ENCODE measurements at regions of chr10 and their contacts with region 1.

Region 1: DNA sequence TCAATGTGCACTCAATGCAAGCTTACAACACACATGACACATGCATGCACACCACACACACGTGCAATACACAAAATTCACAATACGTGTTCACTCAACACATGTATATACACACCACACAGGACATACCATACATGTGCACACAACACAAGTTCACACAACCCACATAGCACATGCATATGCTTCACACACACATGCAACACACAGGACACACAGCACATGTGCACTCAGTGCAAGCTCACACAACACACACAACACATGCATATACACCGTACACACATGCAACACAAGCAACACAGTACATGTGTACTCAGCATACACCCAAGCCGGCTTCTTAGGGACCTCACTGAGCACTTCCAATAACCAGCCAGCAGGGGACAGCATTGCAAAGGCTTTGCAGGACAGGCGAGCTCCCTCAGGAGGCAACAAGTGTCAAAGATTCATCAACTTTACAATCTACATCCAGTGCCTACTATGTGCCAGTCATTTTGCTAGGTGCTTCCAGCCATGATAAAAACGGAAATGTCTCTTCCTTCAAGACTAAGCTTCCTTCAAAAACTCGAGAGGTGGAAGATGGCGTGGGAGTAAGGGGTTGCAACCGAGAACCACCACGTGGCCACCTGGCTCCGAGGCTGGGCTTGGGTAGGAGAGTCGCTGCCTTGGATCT is 61.1 kb downstream of the JCAD start:
- DNase-seq: peak; percentile 85
- ATAC-seq: peak; percentile 89
- H3K4me3 Mint-ChIP-seq: no peak overlapping the region
- H3K27ac Mint-ChIP-seq: no peak overlapping the region
- H3K4me1 Mint-ChIP-seq: peaks cover 5% of the 10 kb centered on the region
- H3K27me3 Mint-ChIP-seq: peaks cover 49% of the 10 kb centered on the region
- CTCF ChIP-seq: peak; percentile 96

Region 2: GRCh38 chr10:30013757-30014156 is 15.5 kb after region 1 on chr10:
- CTCF ChIA-PET with region 1: interaction called, 27 read pairs
- POLR2A ChIA-PET with region 1: no interaction called
- intact Hi-C with region 1: no loop called
- DNase-seq: no peak
- ATAC-seq: no peak
- H3K4me3 Mint-ChIP-seq: no peak overlapping the region
- H3K27ac Mint-ChIP-seq: no peak overlapping the region
- H3K4me1 Mint-ChIP-seq: no peaks in the 10 kb centered on the region
- H3K27me3 Mint-ChIP-seq: peaks cover 30% of the 10 kb centered on the region
- CTCF ChIP-seq: no peak

Region 3: GRCh38 chr10:30027057-30028005 is 29.1 kb after region 1 on chr10:
- CTCF ChIA-PET with region 1: interaction called, 13 read pairs
- POLR2A ChIA-PET with region 1: no interaction called
- intact Hi-C with region 1: no loop called
- DNase-seq: peak; percentile 95
- ATAC-seq: peak; percentile 93
- H3K4me3 Mint-ChIP-seq: peak overlapping the region; percentile 65
- H3K27ac Mint-ChIP-seq: peak overlapping the region; percentile 82
- H3K4me1 Mint-ChIP-seq: peaks cover 36% of the 10 kb centered on the region
- H3K27me3 Mint-ChIP-seq: peaks cover 39% of the 10 kb centered on the region
- CTCF ChIP-seq: peak; percentile 46

Region 4: DNA sequence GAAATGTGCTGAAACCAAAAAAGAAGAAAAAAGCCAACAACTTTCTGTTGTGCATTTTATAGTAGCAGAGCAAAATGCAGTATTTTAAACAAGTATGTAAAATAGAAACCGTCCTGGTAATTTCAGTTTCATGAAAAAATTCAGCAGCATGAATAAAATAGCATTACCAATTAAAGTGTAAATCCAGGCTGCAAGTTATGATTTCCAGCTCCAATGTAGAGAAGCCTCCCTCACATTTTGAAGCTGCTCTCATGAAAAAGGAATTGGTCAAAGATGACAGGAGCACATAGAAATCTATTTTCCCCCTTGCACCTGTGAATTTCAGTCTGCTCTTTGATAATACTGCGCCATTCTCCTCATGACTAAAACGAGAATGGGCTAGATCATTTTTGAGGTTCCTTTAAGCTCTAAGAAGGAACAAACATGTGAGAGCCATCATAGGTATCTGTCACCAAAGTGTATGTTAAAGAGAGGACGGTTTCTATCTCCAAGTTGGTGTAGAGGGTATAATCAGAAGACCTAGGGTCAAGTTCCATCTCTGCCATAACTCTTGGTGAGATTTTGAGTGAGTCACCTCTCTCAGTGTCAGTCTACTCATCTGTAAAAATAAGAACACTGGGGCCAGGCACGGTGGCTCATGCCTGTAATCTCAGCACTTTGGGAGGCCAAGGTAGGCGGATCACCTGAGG is 243.3 kb after region 1 on chr10:
- CTCF ChIA-PET with region 1: interaction called, 19 read pairs
- POLR2A ChIA-PET with region 1: no interaction called
- intact Hi-C with region 1: loop called (anchors 5 kb)
- DNase-seq: no peak
- ATAC-seq: no peak
- H3K4me3 Mint-ChIP-seq: no peak overlapping the region
- H3K27ac Mint-ChIP-seq: no peak overlapping the region
- H3K4me1 Mint-ChIP-seq: no peaks in the 10 kb centered on the region
- H3K27me3 Mint-ChIP-seq: no peaks in the 10 kb centered on the region
- CTCF ChIP-seq: no peak